Activated naive CD4-positive, alpha-beta T cell treated with anti-CD3 and anti-CD28 coated beads, Interleukin-2, amount 10 ng/mL, durations not matched to agents 7 days and 5 days (primary cell): ENCODE measurements at regions of chr9 and their contacts with region 1.

Region 1: GRCh38 chr9:32968101-32969011 is 33.1 kb downstream of the APTX start:
- DNase-seq: peak; percentile 64
- H3K4me3 Mint-ChIP-seq: no peak overlapping the region
- H3K27ac Mint-ChIP-seq: no peak overlapping the region
- H3K4me1 Mint-ChIP-seq: no peaks in the 10 kb centered on the region
- H3K27me3 Mint-ChIP-seq: no peaks in the 10 kb centered on the region

Region 2: DNA sequence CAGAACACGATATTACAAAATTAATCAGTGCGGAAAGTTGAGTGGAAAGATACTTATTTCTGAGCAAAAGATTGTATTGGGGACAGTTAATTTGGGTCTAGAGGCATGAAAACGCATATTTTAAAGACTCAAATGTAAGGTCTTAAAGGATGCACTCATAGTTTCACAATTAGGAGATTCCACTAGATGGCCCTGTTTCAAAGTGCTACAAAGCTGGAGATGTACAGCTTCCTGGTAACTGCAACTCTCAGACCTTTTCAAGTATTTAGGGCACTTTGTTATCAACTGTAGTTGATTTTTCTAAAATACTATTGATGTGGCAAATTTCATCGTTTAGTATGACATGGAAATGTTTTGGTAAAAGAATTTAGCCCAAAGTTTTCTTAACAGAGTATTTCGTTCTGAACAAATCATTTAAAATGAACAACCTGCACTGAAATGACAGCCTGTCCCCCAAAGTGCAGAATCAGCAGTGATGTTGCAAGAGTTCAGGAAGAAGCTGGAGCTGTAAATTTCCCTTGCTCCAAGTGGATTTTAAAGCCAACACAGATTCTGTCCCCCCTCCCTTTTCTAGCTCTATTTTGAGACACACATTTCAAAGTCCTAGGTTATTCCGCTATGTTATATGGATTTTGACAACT is 379.2 kb before region 1 on chr9:
- CTCF ChIA-PET with region 1: interaction called, 45 read pairs
- DNase-seq: no peak
- H3K4me3 Mint-ChIP-seq: no peak overlapping the region
- H3K27ac Mint-ChIP-seq: no peak overlapping the region
- H3K4me1 Mint-ChIP-seq: no peaks in the 10 kb centered on the region
- H3K27me3 Mint-ChIP-seq: peaks cover 12% of the 10 kb centered on the region